ENCODE measurements at regions of chr17 and their contacts with region 1.

Region 1: GRCh38 chr17:83071977-83072546 is 7.3 kb upstream of the METRNL start:
- DNase-seq: peak; percentile 74 to 82 (median 76)
- H3K4me3 ChIP-seq: peak overlapping the region in 1 of 3 experiments; percentile 17
- H3K4me3 Mint-ChIP-seq: peak overlapping the region; percentile 51 to 83
- H3K27ac ChIP-seq: peak overlapping the region in 1 of 2 donors; percentile 48
- H3K27ac Mint-ChIP-seq: peak overlapping the region in 6 of 7 donors; percentile 72 to 91 (median 80)
- H3K4me1 ChIP-seq: peaks cover 31 to 33% of the 10 kb centered on the region in 2 donors
- H3K4me1 Mint-ChIP-seq: peaks cover 26% of the 10 kb centered on the region
- H3K27me3 ChIP-seq: no peaks in the 10 kb centered on the region
- H3K27me3 Mint-ChIP-seq: peaks cover 14 to 27% (median 15%) of the 10 kb centered on the region in 3 donors
- CTCF ChIP-seq: no peak

Region 2: DNA sequence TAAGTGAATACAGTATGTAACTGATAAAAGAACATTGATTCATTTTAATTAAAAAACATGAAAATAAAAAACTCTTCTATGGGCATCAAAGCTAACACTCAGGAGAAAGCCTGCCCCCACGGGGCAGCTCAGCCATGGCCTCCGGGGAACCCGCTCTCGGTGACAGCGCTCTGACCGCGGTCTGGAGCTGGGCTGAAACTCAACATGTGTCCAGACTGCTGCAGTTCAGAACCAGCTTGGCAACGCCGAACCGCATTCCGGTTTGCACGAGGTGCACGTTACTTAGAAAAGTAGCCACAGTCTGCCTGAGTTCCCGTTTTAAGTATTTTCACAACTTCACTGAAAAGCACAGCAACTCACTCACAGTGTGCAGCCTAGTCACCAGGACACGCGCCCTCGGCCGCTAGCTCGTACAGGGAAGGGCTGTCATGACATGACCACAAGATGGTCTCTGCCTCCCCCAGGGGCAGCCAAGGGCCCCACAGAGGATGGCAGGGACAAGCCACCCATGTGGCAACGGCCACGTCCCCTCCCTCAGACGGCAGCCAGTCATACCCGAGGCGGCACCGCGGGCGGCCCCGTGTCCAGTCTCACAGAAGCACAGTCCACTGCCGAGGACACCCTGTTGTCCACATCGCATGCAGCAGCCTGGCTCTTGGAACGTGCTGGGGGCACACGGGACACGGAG is 69.8 kb before region 1 on chr17:
- intact Hi-C with region 1: no loop called
- DNase-seq: no peak
- H3K4me3 ChIP-seq: no peak overlapping the region
- H3K4me3 Mint-ChIP-seq: no peak overlapping the region
- H3K27ac ChIP-seq: no peak overlapping the region
- H3K27ac Mint-ChIP-seq: peak overlapping the region in 1 of 7 donors; percentile 21
- H3K4me1 ChIP-seq: no peaks in the 10 kb centered on the region
- H3K4me1 Mint-ChIP-seq: peaks cover 4% of the 10 kb centered on the region
- H3K27me3 ChIP-seq: no peaks in the 10 kb centered on the region
- H3K27me3 Mint-ChIP-seq: peaks cover 0 to 2% (median 2%) of the 10 kb centered on the region in 3 donors
- CTCF ChIP-seq: no peak

Region 3: GRCh38 chr17:83051395-83052233 is 20.4 kb before region 1 on chr17:
- intact Hi-C with region 1: loop called in 1 of 2 experiments (anchors 2 kb)
- DNase-seq: peak; percentile 97 to 98 (median 97)
- H3K4me3 ChIP-seq: peak overlapping the region; percentile 29 to 74 (median 41)
- H3K4me3 Mint-ChIP-seq: peak overlapping the region; percentile 65 to 74
- H3K27ac ChIP-seq: peak overlapping the region; percentile 91 to 94
- H3K27ac Mint-ChIP-seq: peak overlapping the region; percentile 89 to 99 (median 98)
- H3K4me1 ChIP-seq: peaks cover 64 to 80% of the 10 kb centered on the region in 2 donors
- H3K4me1 Mint-ChIP-seq: peaks cover 60% of the 10 kb centered on the region
- H3K27me3 ChIP-seq: no peaks in the 10 kb centered on the region
- H3K27me3 Mint-ChIP-seq: peaks cover 0 to 9% (median 1%) of the 10 kb centered on the region in 3 donors
- CTCF ChIP-seq: no peak

Measured in CD14-positive monocyte (primary cell).